SK-N-SH (cell line): ENCODE measurements at regions of chr15 and their contacts with region 1.

Region 1: DNA sequence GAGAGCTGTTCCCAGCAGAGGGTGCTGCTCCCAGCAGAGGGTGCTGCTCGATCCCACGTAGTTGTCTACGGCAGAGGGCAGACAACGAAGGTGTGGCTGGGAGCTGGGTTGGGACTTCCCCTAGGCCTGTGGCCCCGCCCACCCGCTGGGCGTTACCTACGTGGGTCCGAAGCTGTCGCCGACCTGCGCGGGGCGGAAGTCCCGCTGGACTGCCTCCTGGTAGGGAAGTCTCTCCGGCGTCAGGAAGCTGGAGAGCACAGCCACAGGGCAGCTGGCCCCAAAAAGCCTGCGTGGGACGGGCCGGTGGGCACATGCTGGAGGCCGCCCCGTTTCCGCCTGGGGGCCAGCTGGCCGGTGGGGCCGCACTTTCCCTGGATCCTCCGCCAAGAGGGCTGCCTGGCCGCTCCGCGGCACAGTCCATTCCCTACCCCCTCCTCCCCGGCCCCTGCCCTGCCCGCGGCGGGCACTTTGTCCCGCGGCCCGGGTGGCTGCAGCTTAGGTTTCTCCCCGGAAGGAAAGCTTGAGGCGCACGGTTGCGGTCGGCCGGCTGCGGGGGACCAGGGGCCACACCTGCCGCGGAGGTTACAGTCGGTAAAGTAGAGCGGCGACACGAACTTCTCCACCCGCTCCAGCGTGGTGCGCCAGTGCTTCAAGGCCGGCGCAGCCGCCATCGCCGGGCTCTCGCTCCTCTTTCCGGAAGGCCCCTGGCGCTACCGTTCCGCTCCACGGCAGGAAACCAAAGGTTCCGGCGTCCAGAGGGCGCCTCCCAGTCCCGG is at the start of gene MAN2C1:
- DNase-seq: peak; percentile 96
- H3K4me3 ChIP-seq: peak within 1 kb of the TSS; percentile 73 to 92
- H3K27ac ChIP-seq: peak within 1 kb of the TSS; percentile 90 to 92
- H3K4me1 ChIP-seq: peaks cover 5 to 16% of the 10 kb centered on the region in 2 experiments; a peak in 3 of 4 replicates
- H3K27me3 ChIP-seq: no peaks in the 10 kb centered on the region
- CTCF ChIP-seq: peak; percentile 75; the same call in 1 of the 2 replicates
- EP300 ChIP-seq: 0 out of 4 replicates have a peak, but pooled peaks of 1 of the 2 experiments have one; percentile 61
- RAD21 ChIP-seq: peak; percentile 64
- polyA plus RNA-seq, gene MAN2C1: 132 and 169 TPM in 2 replicates

Region 2: DNA sequence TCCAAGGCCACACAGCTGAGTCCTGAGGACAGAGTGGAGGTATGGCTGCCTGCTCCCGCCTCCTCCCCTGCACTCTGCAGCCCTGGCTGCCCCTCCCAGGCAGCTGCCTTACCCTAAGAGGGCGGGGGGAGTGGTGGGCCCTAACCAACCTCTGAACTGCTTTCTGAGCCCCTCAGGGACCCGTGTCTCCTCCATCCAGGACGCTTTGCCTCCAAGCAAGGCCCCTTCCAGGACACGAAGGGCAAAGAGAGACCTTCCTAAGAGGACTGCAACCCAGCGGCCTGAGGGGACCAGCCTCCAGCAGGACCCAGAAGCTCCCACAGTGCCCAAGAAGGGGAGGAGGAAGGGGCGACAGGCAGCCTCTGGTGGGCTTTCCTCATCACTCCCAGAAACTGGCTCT is 13.6 kb before region 1 on chr15:
- CTCF ChIA-PET with region 1: interaction called, 29 read pairs
- POLR2A ChIA-PET with region 1: interaction called, 11 read pairs
- DNase-seq: no peak
- H3K4me3 ChIP-seq: no peak overlapping the region
- H3K27ac ChIP-seq: no peak overlapping the region
- H3K4me1 ChIP-seq: no peaks in the 10 kb centered on the region
- H3K27me3 ChIP-seq: no peaks in the 10 kb centered on the region
- CTCF ChIP-seq: no peak
- EP300 ChIP-seq: no peak
- RAD21 ChIP-seq: no peak

Region 3: GRCh38 chr15:75578948-75579920 is 211.1 kb after region 1 on chr15 and contains the start of gene PTPN9:
- CTCF ChIA-PET with region 1: interaction called, 11 read pairs
- POLR2A ChIA-PET with region 1: no interaction called
- DNase-seq: peak; percentile 93
- H3K4me3 ChIP-seq: peak within 1 kb of the TSS; percentile 76 to 92
- H3K27ac ChIP-seq: peak within 1 kb of the TSS; percentile 80 to 84
- H3K4me1 ChIP-seq: peaks cover 0 to 4% of the 10 kb centered on the region in 2 experiments; a peak in 2 of 4 replicates
- H3K27me3 ChIP-seq: no peaks in the 10 kb centered on the region
- CTCF ChIP-seq: peak; percentile 41
- EP300 ChIP-seq: no peak
- RAD21 ChIP-seq: no peak; the same call in 1 of the 2 replicates
- polyA plus RNA-seq, gene PTPN9: 25.9 and 41.1 TPM in 2 replicates

Region 4: GRCh38 chr15:75639709-75640482 is 271.8 kb after region 1 on chr15 and contains the start of gene IMP3:
- CTCF ChIA-PET with region 1: interaction called, 27 read pairs
- POLR2A ChIA-PET with region 1: interaction called, 21 read pairs
- DNase-seq: peak; percentile 98
- H3K4me3 ChIP-seq: peak within 1 kb of the TSS; percentile 71 to 76
- H3K27ac ChIP-seq: peak within 1 kb of the TSS; percentile 87 to 92
- H3K4me1 ChIP-seq: peaks cover 11% of the 10 kb centered on the region in 2 experiments; a peak in 2 of 4 replicates
- H3K27me3 ChIP-seq: no peaks in the 10 kb centered on the region
- CTCF ChIP-seq: no peak
- EP300 ChIP-seq: no peak
- RAD21 ChIP-seq: no peak
- polyA plus RNA-seq, gene IMP3: 56.1 and 56.2 TPM in 2 replicates

Region 5: GRCh38 chr15:75684642-75685041 is 316.5 kb after region 1 on chr15:
- CTCF ChIA-PET with region 1: interaction called, 12 read pairs
- POLR2A ChIA-PET with region 1: interaction called, 4 read pairs
- DNase-seq: no peak
- H3K4me3 ChIP-seq: no peak overlapping the region
- H3K27ac ChIP-seq: no peak overlapping the region
- H3K4me1 ChIP-seq: peaks cover 0 to 18% of the 10 kb centered on the region in 2 experiments; a peak in 1 of 4 replicates
- H3K27me3 ChIP-seq: no peaks in the 10 kb centered on the region
- CTCF ChIP-seq: no peak
- EP300 ChIP-seq: no peak
- RAD21 ChIP-seq: peak; percentile 35; the same call in 1 of the 2 replicates